Activated CD8-positive, alpha-beta T cell treated with anti-CD3 and anti-CD28 coated beads for 36 hours (primary cell): ENCODE measurements at regions of chr9 and their contacts with region 1.

Region 1: GRCh38 chr9:91949946-91950664 is at the start of gene ROR2:
- DNase-seq: peak; percentile 64
- ATAC-seq: peak; percentile 94
- H3K4me3 Mint-ChIP-seq: peak within 1 kb of the TSS; percentile 38
- H3K27ac Mint-ChIP-seq: no peak within 1 kb of the TSS
- H3K4me1 Mint-ChIP-seq: peaks cover 4% of the 10 kb centered on the region
- H3K27me3 Mint-ChIP-seq: peaks cover 67% of the 10 kb centered on the region
- CTCF ChIP-seq: peak; percentile 51
- total RNA-seq, gene ROR2: not detected

Region 2: GRCh38 chr9:91775011-91775707 is 174.9 kb before region 1 on chr9:
- CTCF ChIA-PET with region 1: interaction called, 13 read pairs
- POLR2A ChIA-PET with region 1: no interaction called
- intact Hi-C with region 1: loop called (anchors 5 kb)
- DNase-seq: peak; percentile 79
- ATAC-seq: peak; percentile 73
- H3K4me3 Mint-ChIP-seq: no peak overlapping the region
- H3K27ac Mint-ChIP-seq: no peak overlapping the region
- H3K4me1 Mint-ChIP-seq: no peaks in the 10 kb centered on the region
- H3K27me3 Mint-ChIP-seq: peaks cover 12% of the 10 kb centered on the region
- CTCF ChIP-seq: peak; percentile 87

Region 3: DNA sequence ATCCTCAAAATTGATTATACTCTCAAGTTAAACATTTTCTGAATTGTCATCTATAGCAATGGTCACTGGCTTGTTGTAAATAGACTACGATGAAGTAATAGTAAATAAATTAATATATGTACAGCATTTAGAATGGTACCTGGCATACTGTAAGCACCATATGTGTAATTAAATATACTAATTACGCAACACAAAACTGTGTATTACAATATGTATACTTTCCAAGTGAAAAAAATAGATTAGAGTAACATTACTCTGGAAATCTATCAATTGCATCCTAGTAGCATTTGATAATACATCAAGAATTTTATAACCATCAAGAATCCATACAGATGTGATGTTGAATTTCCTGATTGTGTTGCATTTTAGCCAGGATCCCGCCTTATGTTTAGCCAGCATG is 17.2 kb after region 1 on chr9:
- CTCF ChIA-PET with region 1: interaction called, 10 read pairs
- POLR2A ChIA-PET with region 1: no interaction called
- intact Hi-C with region 1: no loop called
- DNase-seq: no peak
- ATAC-seq: no peak
- H3K4me3 Mint-ChIP-seq: no peak overlapping the region
- H3K27ac Mint-ChIP-seq: no peak overlapping the region
- H3K4me1 Mint-ChIP-seq: no peaks in the 10 kb centered on the region
- H3K27me3 Mint-ChIP-seq: peaks cover 24% of the 10 kb centered on the region
- CTCF ChIP-seq: no peak

Region 4: GRCh38 chr9:92064711-92065110 is 114.6 kb after region 1 on chr9:
- CTCF ChIA-PET with region 1: no interaction called
- POLR2A ChIA-PET with region 1: no interaction called
- intact Hi-C with region 1: no loop called
- DNase-seq: no peak
- ATAC-seq: no peak
- H3K4me3 Mint-ChIP-seq: no peak overlapping the region
- H3K27ac Mint-ChIP-seq: no peak overlapping the region
- H3K4me1 Mint-ChIP-seq: peaks cover 3% of the 10 kb centered on the region
- H3K27me3 Mint-ChIP-seq: no peaks in the 10 kb centered on the region
- CTCF ChIP-seq: no peak

Region 5: DNA sequence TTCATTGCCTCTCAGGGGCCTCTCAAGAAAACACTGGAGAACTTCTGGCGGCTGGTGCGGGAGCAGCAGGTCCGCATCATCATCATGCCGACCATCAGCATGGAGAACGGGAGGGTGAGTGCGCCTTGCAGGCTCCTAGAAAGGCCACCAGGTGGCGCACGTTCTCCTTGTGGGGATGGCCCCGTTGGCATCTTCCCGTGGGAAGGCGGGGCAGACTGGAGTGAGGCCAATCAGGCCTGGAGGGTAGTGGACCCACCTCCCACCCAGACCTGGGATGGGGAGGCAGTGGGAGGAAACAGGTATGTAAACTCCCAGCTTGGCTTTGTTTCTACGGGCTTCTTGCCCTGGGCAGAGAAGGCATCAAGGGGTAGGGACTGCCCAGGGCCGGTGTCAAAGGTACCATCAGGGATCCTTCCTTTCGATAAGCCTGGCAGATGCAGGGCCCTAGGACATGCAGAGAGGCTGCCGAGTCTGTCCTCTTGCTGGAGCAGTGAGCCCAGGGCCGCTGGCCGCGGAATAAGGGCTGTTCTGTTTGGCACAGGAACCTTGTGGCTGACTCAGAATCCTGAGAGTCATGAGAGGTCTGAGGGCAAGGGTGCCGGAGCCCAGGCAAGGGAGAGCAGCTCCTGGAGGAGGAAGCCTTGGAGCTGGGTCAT is 184.0 kb after region 1 on chr9:
- CTCF ChIA-PET with region 1: no interaction called
- POLR2A ChIA-PET with region 1: no interaction called
- intact Hi-C with region 1: no loop called
- DNase-seq: peak; percentile 84
- ATAC-seq: peak; percentile 88
- H3K4me3 Mint-ChIP-seq: no peak overlapping the region
- H3K27ac Mint-ChIP-seq: no peak overlapping the region
- H3K4me1 Mint-ChIP-seq: peaks cover 6% of the 10 kb centered on the region
- H3K27me3 Mint-ChIP-seq: peaks cover 27% of the 10 kb centered on the region
- CTCF ChIP-seq: peak; percentile 94